ENCODE measurements at regions of chr12 and their contacts with region 1.

Region 1: GRCh38 chr12:103441437-103442181 is 54.2 kb downstream of the C12orf42 start:
- DNase-seq: peak; percentile 39
- ATAC-seq: peak; percentile 92
- H3K4me3 Mint-ChIP-seq: peak overlapping the region; percentile 91
- H3K27ac Mint-ChIP-seq: peak overlapping the region; percentile 98
- H3K4me1 Mint-ChIP-seq: peaks cover 46% of the 10 kb centered on the region
- H3K27me3 Mint-ChIP-seq: no peaks in the 10 kb centered on the region
- CTCF ChIP-seq: no peak

Region 2: GRCh38 chr12:102958073-102958829 is 483.4 kb before region 1 on chr12:
- CTCF ChIA-PET with region 1: no interaction called
- POLR2A ChIA-PET with region 1: no interaction called
- intact Hi-C with region 1: loop called (anchors 5 kb)
- DNase-seq: no peak
- ATAC-seq: peak; percentile 73
- H3K4me3 Mint-ChIP-seq: peak overlapping the region; percentile 76
- H3K27ac Mint-ChIP-seq: no peak overlapping the region
- H3K4me1 Mint-ChIP-seq: peaks cover 28% of the 10 kb centered on the region
- H3K27me3 Mint-ChIP-seq: peaks cover 81% of the 10 kb centered on the region
- CTCF ChIP-seq: no peak

Region 3: GRCh38 chr12:103181366-103182152 is 260.1 kb before region 1 on chr12:
- CTCF ChIA-PET with region 1: no interaction called
- POLR2A ChIA-PET with region 1: no interaction called
- intact Hi-C with region 1: loop called (anchors 1 kb)
- DNase-seq: no peak
- ATAC-seq: peak; percentile 93
- H3K4me3 Mint-ChIP-seq: no peak overlapping the region
- H3K27ac Mint-ChIP-seq: no peak overlapping the region
- H3K4me1 Mint-ChIP-seq: peaks cover 10% of the 10 kb centered on the region
- H3K27me3 Mint-ChIP-seq: no peaks in the 10 kb centered on the region
- CTCF ChIP-seq: no peak

Region 4: DNA sequence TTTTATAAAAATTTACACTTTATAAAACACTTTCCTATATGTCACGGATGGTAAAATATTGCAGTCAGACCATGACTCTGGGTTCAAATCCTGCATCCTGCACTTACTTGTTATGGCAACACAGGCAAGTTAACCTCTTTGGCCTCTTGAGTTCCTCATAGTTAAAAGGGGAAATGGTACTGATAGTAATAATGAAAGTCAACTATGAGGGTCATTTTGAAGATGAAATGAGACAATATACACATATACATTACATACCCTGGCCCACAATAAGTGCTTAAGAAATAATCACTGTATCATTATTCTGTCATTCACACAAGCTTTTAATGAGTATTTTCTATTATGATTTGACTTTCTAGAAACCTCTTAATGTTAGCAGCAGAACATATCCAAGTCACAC is 10.2 kb before region 1 on chr12:
- CTCF ChIA-PET with region 1: no interaction called
- POLR2A ChIA-PET with region 1: interaction called, 4 read pairs
- intact Hi-C with region 1: loop called (anchors 1 kb)
- DNase-seq: no peak
- ATAC-seq: peak; percentile 72
- H3K4me3 Mint-ChIP-seq: no peak overlapping the region
- H3K27ac Mint-ChIP-seq: peak overlapping the region; percentile 73
- H3K4me1 Mint-ChIP-seq: peaks cover 59% of the 10 kb centered on the region
- H3K27me3 Mint-ChIP-seq: no peaks in the 10 kb centered on the region
- CTCF ChIP-seq: no peak

Region 5: GRCh38 chr12:103455020-103455763 is 13.6 kb after region 1 on chr12:
- CTCF ChIA-PET with region 1: no interaction called
- POLR2A ChIA-PET with region 1: interaction called, 8 read pairs
- intact Hi-C with region 1: loop called (anchors 1 kb)
- DNase-seq: no peak
- ATAC-seq: peak; percentile 98
- H3K4me3 Mint-ChIP-seq: peak overlapping the region; percentile 26
- H3K27ac Mint-ChIP-seq: peak overlapping the region; percentile 70
- H3K4me1 Mint-ChIP-seq: peaks cover 46% of the 10 kb centered on the region
- H3K27me3 Mint-ChIP-seq: no peaks in the 10 kb centered on the region
- CTCF ChIP-seq: no peak

Region 6: GRCh38 chr12:103462675-103463074 is 21.1 kb after region 1 on chr12:
- CTCF ChIA-PET with region 1: no interaction called
- POLR2A ChIA-PET with region 1: interaction called, 17 read pairs
- intact Hi-C with region 1: no loop called
- DNase-seq: no peak
- ATAC-seq: peak; percentile 92
- H3K4me3 Mint-ChIP-seq: no peak overlapping the region
- H3K27ac Mint-ChIP-seq: peak overlapping the region; percentile 7
- H3K4me1 Mint-ChIP-seq: peaks cover 32% of the 10 kb centered on the region
- H3K27me3 Mint-ChIP-seq: no peaks in the 10 kb centered on the region
- CTCF ChIP-seq: no peak

Region 7: DNA sequence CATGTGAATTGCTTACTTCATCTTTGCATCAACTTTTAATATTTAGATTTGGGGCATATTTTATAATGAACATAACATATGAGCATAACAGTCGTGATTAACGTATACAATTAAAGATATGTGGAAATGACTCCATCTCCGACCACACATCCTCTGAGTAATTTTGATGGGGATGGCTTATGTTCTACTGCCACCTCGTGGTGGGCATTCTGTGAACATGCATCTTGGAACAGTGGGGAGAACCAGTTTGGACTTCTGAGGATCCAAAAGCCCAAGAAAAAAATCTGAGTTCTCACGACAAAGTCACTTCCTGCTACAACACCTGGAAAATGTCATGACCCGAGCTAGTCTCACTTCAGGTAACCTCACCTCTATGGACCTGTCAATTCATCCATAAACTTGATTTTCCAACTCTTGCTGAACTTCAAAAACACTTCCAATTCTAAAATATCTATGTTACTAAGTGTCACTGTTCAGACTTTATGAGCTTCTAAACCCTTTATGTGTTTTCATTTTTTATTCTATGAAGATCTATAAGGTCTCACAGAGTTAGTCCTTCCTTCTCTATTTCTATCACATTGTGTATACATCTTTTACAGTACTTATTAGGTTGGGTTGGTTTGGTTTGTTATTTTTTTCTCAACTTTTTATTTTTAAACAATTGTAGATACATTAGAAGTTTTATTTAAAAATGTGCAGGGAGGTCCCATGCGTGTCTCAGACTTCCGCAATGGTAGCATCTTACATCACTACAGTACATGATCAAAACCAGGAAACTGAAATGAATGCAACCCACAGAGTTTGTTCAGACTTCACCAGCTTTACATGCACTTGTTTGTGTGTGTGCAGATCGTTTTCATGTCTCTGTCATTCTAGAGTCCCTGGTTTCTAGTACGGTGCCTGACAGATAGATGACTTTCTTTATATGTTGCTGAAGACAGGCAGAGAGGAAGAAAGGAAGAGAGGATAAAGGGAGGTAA is 107.3 kb after region 1 on chr12:
- CTCF ChIA-PET with region 1: interaction called, 7 read pairs
- POLR2A ChIA-PET with region 1: no interaction called
- intact Hi-C with region 1: loop called (anchors 5 kb)
- DNase-seq: peak; percentile 44
- ATAC-seq: peak; percentile 74
- H3K4me3 Mint-ChIP-seq: no peak overlapping the region
- H3K27ac Mint-ChIP-seq: peak overlapping the region; percentile 62
- H3K4me1 Mint-ChIP-seq: peaks cover 13% of the 10 kb centered on the region
- H3K27me3 Mint-ChIP-seq: peaks cover 9% of the 10 kb centered on the region
- CTCF ChIP-seq: peak; percentile 90

Measured in activated B cell treated with CpG ODN at 0.5 μM for 24 hours (primary cell).